ENCODE measurements at regions of chr1 and their contacts with region 1.

Region 1: GRCh38 chr1:31789259-31790065 is 25.3 kb upstream of the ADGRB2 start:
- DNase-seq: peak; percentile 93
- H3K4me3 ChIP-seq: peak overlapping the region; percentile 56
- H3K27ac ChIP-seq: peak overlapping the region; percentile 18
- H3K4me1 ChIP-seq: peaks cover 9% of the 10 kb centered on the region
- H3K27me3 ChIP-seq: no peaks in the 10 kb centered on the region
- CTCF ChIP-seq: peak; percentile 94

Region 2: DNA sequence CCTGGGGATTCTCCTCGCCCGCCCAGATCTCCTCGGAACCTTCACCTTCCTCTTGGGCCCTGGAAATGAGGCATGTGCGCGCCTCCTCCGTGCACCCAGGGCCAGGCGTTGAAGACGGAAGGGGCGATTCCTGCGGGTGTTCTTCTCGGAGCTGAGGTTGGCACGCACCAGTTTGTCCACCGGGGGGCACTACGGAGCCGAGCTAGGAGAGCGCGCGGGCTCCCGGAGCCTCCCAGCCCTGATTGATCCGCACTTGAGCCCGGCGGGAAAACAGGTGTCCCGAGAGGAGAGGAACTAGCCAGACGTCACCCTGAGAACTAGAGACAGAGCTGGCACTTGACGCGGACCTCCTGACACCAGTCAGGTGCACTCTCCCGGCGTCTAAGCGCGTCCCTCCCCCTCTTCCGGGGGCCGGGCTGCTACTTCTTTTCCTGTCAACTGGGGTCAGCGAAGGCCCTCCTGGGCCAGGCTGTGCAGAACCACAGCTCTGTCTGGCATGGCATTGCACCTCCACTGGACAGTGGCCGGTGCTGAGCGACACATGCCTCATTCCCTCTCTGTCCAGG is 394.8 kb before region 1 on chr1:
- CTCF ChIA-PET with region 1: interaction called, 4 read pairs
- POLR2A ChIA-PET with region 1: no interaction called
- intact Hi-C with region 1: loop called (anchors 10 kb)
- DNase-seq: peak; percentile 87
- H3K4me3 ChIP-seq: peak overlapping the region; percentile 38
- H3K27ac ChIP-seq: no peak overlapping the region
- H3K4me1 ChIP-seq: peaks cover 3% of the 10 kb centered on the region
- H3K27me3 ChIP-seq: no peaks in the 10 kb centered on the region
- CTCF ChIP-seq: peak; percentile 89

Region 3: DNA sequence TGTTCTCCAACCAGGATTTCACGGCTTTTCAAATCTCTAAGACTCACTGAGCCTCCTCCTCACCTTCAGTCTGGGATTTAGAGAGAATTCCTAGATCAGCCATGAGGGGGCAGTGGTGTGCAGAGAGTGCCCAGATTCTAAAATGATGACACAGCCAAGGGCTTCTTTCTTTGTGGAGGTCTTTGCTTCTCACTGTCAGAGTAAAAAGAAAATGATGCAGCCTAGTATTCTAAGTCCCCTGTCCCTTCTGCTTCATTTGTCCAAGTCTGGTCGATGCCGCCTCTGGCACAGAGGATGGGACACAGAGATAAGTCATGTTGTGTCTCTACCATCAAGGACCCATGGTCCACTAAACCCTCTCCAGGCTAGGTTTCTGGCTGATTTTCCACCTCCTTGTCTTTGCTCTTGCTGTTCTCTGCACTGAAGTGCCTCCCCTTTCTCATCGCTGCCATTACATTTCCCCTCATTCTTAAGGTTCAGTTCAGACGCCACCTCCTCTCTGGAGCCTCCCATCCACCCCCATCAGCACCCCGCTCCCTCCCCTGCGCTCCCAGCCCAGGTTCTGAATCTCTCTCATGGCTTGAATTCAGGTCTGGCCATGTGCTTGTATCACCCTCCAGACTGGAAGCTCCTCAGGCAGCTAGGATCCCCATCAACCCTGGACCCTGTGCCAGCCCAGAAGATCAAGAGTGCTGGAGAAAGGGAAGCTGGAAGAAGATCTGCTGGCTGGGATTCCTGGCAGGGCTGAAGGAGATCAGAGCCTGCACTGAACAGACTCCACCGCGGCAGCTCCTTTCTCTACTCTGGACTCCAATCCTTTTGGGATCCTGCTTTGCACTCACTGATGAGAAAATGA is 225.1 kb before region 1 on chr1:
- CTCF ChIA-PET with region 1: interaction called, 4 read pairs
- POLR2A ChIA-PET with region 1: no interaction called
- intact Hi-C with region 1: loop called (anchors 5 kb)
- DNase-seq: peak; percentile 77
- H3K4me3 ChIP-seq: no peak overlapping the region
- H3K27ac ChIP-seq: no peak overlapping the region
- H3K4me1 ChIP-seq: no peaks in the 10 kb centered on the region
- H3K27me3 ChIP-seq: no peaks in the 10 kb centered on the region
- CTCF ChIP-seq: peak; percentile 87

Region 4: GRCh38 chr1:31745096-31745945 is 44.1 kb before region 1 on chr1:
- CTCF ChIA-PET with region 1: interaction called, 11 read pairs
- POLR2A ChIA-PET with region 1: no interaction called
- intact Hi-C with region 1: no loop called
- DNase-seq: peak; percentile 78
- H3K4me3 ChIP-seq: no peak overlapping the region
- H3K27ac ChIP-seq: no peak overlapping the region
- H3K4me1 ChIP-seq: peaks cover 11% of the 10 kb centered on the region
- H3K27me3 ChIP-seq: no peaks in the 10 kb centered on the region
- CTCF ChIP-seq: peak; percentile 80

Region 5: DNA sequence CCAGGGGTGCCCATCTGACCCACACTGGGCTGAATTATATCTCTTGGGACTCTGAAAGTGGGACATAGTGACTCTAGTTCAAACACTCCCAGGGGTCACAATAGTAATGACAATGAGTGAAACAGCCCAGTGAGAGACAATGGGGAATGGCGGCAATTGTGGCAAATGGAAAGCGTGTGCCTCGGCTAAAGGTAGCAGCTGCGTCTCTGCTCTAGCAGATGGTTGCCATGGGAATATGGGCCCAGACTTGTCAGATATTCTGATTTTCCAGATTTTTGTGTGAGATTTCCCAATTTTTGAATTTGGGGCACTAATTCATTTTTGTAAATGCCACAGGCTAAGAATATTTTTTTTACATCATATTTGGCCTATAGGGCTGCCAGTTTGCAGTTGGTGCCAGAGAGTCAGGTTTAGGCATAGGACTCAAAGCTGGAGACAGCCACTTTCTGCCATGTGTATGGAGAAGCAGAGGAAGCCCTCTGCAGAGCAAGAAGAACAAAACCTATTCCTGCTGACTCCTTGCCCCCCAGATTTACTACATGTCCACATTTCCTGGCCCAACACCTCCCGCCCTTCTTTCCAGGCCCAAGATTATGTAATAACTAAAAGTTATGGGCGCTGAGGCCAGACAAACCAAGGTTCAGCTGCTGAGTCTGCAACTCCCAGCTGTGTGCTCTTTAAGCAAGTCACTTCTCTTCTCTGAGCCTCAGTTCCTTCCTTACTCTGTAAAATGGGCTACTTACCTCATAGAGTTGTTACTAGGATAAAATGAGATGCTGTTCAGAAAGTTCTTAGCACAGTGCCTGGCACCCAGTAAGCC is 170.3 kb after region 1 on chr1:
- CTCF ChIA-PET with region 1: interaction called, 19 read pairs
- POLR2A ChIA-PET with region 1: no interaction called
- intact Hi-C with region 1: no loop called
- DNase-seq: no peak
- H3K4me3 ChIP-seq: no peak overlapping the region
- H3K27ac ChIP-seq: no peak overlapping the region
- H3K4me1 ChIP-seq: peaks cover 13% of the 10 kb centered on the region
- H3K27me3 ChIP-seq: no peaks in the 10 kb centered on the region
- CTCF ChIP-seq: no peak